ENCODE measurements at regions of chr6 and their contacts with region 1.

Region 1: DNA sequence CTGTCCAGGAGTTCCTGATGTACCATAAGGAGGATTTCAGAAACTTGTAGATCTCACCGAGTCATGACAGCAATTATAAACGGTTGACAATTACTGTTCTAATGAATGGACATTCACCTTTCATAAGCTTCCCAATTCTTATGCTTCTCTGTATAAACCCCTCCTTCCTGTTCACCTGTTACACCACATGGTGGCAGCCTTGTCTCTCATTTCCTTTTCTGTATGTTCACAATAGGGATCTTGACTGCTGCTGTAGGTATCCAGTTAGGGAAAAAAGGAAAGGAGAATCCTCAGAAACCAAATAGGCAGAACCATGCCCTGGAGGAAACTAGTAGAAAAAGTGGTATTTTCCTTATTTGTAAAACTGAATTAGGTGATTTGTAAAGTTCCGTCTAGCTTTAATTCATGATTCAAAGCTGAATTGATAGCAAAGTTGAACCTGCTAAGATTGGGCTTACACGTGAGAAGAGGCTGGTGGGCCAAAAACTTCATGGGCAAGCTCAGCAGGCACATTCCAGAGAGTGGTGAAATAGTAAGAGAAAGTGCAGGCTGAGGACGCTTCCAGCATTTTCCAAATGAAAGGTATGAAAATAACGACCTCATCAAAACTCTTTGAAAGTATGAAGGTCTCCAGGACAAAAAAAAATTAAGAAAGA is 29.0 kb upstream of the TBPL1 start:
- DNase-seq: no peak
- ATAC-seq: peak; percentile 88
- H3K4me3 Mint-ChIP-seq: no peak overlapping the region
- H3K27ac Mint-ChIP-seq: no peak overlapping the region
- H3K4me1 Mint-ChIP-seq: no peaks in the 10 kb centered on the region
- H3K27me3 Mint-ChIP-seq: peaks cover 22% of the 10 kb centered on the region
- CTCF ChIP-seq: peak; percentile 56

Region 2: GRCh38 chr6:132962936-132963868 is 960.9 kb before region 1 on chr6:
- CTCF ChIA-PET with region 1: no interaction called
- POLR2A ChIA-PET with region 1: no interaction called
- intact Hi-C with region 1: loop called (anchors 2 kb)
- DNase-seq: peak; percentile 19
- ATAC-seq: peak; percentile 69
- H3K4me3 Mint-ChIP-seq: no peak overlapping the region
- H3K27ac Mint-ChIP-seq: no peak overlapping the region
- H3K4me1 Mint-ChIP-seq: no peaks in the 10 kb centered on the region
- H3K27me3 Mint-ChIP-seq: peaks cover 24% of the 10 kb centered on the region
- CTCF ChIP-seq: peak; percentile 56

Region 3: GRCh38 chr6:133523816-133524215 is 400.2 kb before region 1 on chr6:
- CTCF ChIA-PET with region 1: no interaction called
- POLR2A ChIA-PET with region 1: no interaction called
- intact Hi-C with region 1: no loop called
- DNase-seq: no peak
- ATAC-seq: no peak
- H3K4me3 Mint-ChIP-seq: no peak overlapping the region
- H3K27ac Mint-ChIP-seq: no peak overlapping the region
- H3K4me1 Mint-ChIP-seq: no peaks in the 10 kb centered on the region
- H3K27me3 Mint-ChIP-seq: no peaks in the 10 kb centered on the region
- CTCF ChIP-seq: no peak

Region 4: GRCh38 chr6:133937909-133938308 is 13.8 kb after region 1 on chr6:
- CTCF ChIA-PET with region 1: interaction called, 12 read pairs
- POLR2A ChIA-PET with region 1: no interaction called
- intact Hi-C with region 1: no loop called
- DNase-seq: no peak
- ATAC-seq: no peak
- H3K4me3 Mint-ChIP-seq: no peak overlapping the region
- H3K27ac Mint-ChIP-seq: no peak overlapping the region
- H3K4me1 Mint-ChIP-seq: no peaks in the 10 kb centered on the region
- H3K27me3 Mint-ChIP-seq: peaks cover 21% of the 10 kb centered on the region
- CTCF ChIP-seq: no peak

Region 5: DNA sequence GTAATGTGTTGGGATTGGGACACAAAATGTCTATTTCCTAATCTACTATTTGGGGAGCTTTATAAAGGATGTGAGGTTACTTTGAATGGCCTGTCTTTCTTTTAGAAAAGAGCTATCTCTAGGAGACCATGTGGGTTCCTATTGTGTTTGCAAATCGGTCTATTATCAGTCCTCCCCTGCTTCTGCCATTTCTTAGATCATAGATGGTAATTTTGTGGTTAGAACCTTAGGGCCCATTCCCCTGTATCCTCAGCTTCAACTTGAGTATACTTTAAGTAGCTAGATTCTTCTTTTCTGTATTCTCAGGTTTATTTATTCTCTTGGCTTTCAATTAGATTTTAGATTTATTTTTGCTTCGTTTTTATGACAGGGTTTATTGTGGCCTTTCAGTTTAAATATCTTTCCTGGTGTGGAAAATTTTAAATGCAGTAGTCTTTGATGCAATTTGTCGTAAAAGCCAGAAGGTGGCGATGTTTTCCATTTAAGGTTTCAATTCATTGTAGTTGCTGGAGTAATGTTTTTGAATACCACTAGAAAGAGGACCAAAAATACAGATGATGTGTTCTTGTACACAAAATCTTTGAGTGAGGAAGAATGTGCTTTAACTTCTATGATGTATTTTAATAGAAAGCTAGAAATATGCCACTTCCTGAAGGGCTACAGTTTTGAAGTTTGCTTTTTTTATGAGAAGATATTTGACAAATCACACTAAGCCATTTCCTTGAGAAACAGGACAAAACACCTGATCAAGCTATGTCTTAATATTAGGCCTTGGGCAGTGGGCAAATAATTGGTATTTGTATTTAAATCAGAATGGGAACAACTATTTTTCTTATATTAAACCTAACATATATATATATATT is 49.3 kb after region 1 on chr6:
- CTCF ChIA-PET with region 1: interaction called, 30 read pairs
- POLR2A ChIA-PET with region 1: no interaction called
- intact Hi-C with region 1: loop called (anchors 1 kb)
- DNase-seq: no peak
- ATAC-seq: peak; percentile 61
- H3K4me3 Mint-ChIP-seq: no peak overlapping the region
- H3K27ac Mint-ChIP-seq: no peak overlapping the region
- H3K4me1 Mint-ChIP-seq: peaks cover 21% of the 10 kb centered on the region
- H3K27me3 Mint-ChIP-seq: no peaks in the 10 kb centered on the region
- CTCF ChIP-seq: peak; percentile 86

Region 6: GRCh38 chr6:134063966-134064445 is 139.9 kb after region 1 on chr6:
- CTCF ChIA-PET with region 1: interaction called, 129 read pairs
- POLR2A ChIA-PET with region 1: interaction called, 7 read pairs
- intact Hi-C with region 1: loop called (anchors 1 kb)
- DNase-seq: no peak
- ATAC-seq: peak; percentile 94
- H3K4me3 Mint-ChIP-seq: no peak overlapping the region
- H3K27ac Mint-ChIP-seq: no peak overlapping the region
- H3K4me1 Mint-ChIP-seq: peaks cover 2% of the 10 kb centered on the region
- H3K27me3 Mint-ChIP-seq: peaks cover 3% of the 10 kb centered on the region
- CTCF ChIP-seq: peak; percentile 16

Region 7: GRCh38 chr6:134080171-134080795 is 156.2 kb after region 1 on chr6:
- CTCF ChIA-PET with region 1: interaction called, 11 read pairs
- POLR2A ChIA-PET with region 1: no interaction called
- intact Hi-C with region 1: no loop called
- DNase-seq: no peak
- ATAC-seq: peak; percentile 57
- H3K4me3 Mint-ChIP-seq: peak overlapping the region; percentile 25
- H3K27ac Mint-ChIP-seq: no peak overlapping the region
- H3K4me1 Mint-ChIP-seq: peaks cover 43% of the 10 kb centered on the region
- H3K27me3 Mint-ChIP-seq: no peaks in the 10 kb centered on the region
- CTCF ChIP-seq: no peak

Measured in activated B cell treated with CpG ODN at 0.5 μM for 24 hours (primary cell).